Tibial artery (tissue), 4 donors: ENCODE measurements at regions of chr10 and their contacts with region 1.

Region 1: DNA sequence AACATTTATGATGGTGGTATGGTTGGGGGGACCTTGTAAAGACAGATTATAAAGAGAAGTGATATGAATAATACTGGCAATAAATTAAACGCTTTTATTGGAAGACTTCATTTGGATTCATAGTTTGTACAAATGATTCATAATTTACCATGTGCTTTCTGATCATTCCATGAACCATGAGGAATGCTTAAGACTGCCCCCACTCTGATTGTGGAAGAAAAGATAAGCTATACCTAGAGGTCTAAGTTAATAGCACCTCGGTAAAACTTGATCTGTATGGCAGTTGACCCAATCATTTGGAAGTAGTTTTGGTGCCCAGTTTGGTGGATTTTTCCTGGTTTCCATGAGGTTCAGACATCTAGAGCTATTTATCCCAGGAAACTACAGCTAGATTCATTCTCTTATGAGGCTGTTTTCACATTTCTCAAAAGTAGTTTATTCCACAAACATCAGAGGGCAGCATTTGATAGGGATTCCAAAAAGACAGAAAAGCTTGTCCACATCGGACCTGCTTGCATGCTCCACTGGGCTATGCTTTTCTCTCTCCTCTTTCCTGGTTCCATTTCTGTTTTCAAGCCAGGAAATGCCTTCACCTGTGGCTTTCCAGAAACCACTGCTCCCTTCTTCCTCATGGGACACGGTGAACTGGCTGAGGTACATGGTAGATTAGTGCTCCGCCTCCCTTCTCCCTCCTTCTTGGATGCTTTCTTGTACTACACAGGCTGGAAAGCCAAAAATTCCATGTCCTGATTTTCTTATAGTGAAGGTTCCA is 29.2 kb downstream of the TFAM start:
- DNase-seq: no peak
- H3K4me3 ChIP-seq: no peak overlapping the region
- H3K27ac ChIP-seq: no peak overlapping the region
- H3K4me1 ChIP-seq: peaks cover 0 to 8% (median 2%) of the 10 kb centered on the region in 4 donors
- H3K27me3 ChIP-seq: no peaks in the 10 kb centered on the region
- CTCF ChIP-seq: peak; percentile 50 to 51

Region 2: GRCh38 chr10:58513188-58514110 is 99.0 kb after region 1 on chr10:
- intact Hi-C with region 1: loop called (anchors 10 kb)
- DNase-seq: peak; percentile 76 to 77
- H3K4me3 ChIP-seq: peak overlapping the region; percentile 76 to 90
- H3K27ac ChIP-seq: peak overlapping the region; percentile 75 to 78
- H3K4me1 ChIP-seq: peaks cover 0 to 11% (median 0%) of the 10 kb centered on the region in 4 donors
- H3K27me3 ChIP-seq: no peaks in the 10 kb centered on the region
- CTCF ChIP-seq: no peak